MCF 10A (cell line): ENCODE measurements at regions of chr11 and their contacts with region 1.

Region 1: DNA sequence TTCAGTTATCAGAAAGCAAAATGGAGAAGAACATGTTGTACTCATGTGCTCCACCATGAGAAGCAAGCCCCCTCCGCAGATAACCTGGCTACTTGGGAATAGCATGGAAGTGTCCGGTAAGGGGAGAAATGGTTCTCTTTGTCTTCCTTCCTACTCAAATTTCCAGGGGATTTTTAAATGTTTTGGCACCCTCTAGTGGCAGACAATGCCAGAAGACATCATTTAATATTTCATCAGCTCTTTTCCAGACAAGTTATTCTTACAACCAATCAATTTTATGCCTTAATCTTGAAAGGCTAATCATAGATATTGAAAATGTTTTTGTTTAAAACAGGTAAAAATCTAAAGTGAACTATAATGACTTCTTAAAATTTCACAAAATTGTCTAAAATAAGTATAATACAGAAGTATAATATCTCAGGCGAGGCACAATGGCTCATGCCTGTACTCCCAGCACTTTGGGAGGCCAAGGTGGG is 15.7 kb downstream of the CRTAM start:
- DNase-seq: peak; percentile 81
- H3K4me3 Mint-ChIP-seq: no peak overlapping the region
- H3K27ac Mint-ChIP-seq: no peak overlapping the region
- H3K4me1 Mint-ChIP-seq: peaks cover 20% of the 10 kb centered on the region
- H3K27me3 Mint-ChIP-seq: no peaks in the 10 kb centered on the region
- CTCF ChIP-seq: peak; percentile 57

Region 2: GRCh38 chr11:122628810-122629555 is 225.0 kb before region 1 on chr11:
- CTCF ChIA-PET with region 1: interaction called, 53 read pairs
- POLR2A ChIA-PET with region 1: interaction called, 6 read pairs
- intact Hi-C with region 1: loop called (anchors 1 kb)
- DNase-seq: peak; percentile 82
- H3K4me3 Mint-ChIP-seq: no peak overlapping the region
- H3K27ac Mint-ChIP-seq: no peak overlapping the region
- H3K4me1 Mint-ChIP-seq: peaks cover 18% of the 10 kb centered on the region
- H3K27me3 Mint-ChIP-seq: no peaks in the 10 kb centered on the region
- CTCF ChIP-seq: peak; percentile 83

Region 3: DNA sequence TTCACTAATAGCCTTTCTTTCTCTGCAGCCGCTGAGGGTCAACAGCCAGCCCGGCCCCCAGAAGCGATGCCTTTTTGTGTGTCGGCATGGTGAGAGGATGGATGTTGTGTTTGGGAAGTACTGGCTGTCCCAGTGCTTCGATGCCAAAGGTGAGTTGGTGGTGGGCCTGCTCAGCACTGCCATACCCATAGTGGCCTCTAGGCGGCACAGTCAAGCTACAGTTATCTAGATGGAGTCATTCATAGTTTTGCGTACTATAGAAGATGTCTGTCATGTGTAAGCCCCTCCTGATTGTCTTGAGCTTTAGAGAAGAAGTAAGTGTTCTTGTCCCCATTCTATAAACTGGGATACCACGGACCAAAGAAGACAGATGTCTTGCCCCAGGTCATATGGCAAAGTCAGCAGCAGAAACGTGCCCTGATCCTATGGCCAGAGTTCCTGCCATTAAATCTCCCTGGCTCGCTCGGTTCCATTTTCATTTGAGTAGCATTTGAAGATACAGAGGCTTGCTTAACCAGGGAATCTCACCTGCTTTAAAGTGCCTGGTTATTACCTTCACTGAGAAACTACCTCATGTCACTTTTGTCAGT is 57.8 kb before region 1 on chr11:
- CTCF ChIA-PET with region 1: interaction called, 404 read pairs
- POLR2A ChIA-PET with region 1: interaction called, 5 read pairs
- intact Hi-C with region 1: loop called (anchors 1 kb)
- DNase-seq: peak; percentile 62
- H3K4me3 Mint-ChIP-seq: no peak overlapping the region
- H3K27ac Mint-ChIP-seq: no peak overlapping the region
- H3K4me1 Mint-ChIP-seq: peaks cover 10% of the 10 kb centered on the region
- H3K27me3 Mint-ChIP-seq: no peaks in the 10 kb centered on the region
- CTCF ChIP-seq: peak; percentile 94

Region 4: DNA sequence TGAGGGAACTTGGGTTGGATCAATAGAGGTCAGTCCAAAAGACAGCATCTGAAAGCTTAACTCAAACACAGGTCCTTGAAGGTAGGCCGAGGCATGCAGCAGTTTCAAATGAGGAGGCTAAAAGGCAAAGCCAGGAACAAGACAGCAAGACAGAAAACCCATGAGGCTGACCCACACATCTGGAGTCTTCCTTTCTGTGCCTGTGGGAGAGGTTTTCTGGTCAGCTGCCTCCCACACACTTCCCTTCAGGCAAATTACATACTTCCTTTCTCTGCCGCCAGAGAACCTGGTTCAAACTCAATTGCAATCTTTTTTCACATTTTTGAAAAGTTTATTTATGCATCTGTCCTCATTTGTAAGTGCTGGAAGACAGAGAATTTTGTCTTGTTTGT is 45.5 kb before region 1 on chr11:
- CTCF ChIA-PET with region 1: interaction called, 26 read pairs
- POLR2A ChIA-PET with region 1: interaction called, 16 read pairs
- intact Hi-C with region 1: no loop called
- DNase-seq: no peak
- H3K4me3 Mint-ChIP-seq: no peak overlapping the region
- H3K27ac Mint-ChIP-seq: peak overlapping the region; percentile 70
- H3K4me1 Mint-ChIP-seq: peaks cover 32% of the 10 kb centered on the region
- H3K27me3 Mint-ChIP-seq: no peaks in the 10 kb centered on the region
- CTCF ChIP-seq: no peak

Region 5: GRCh38 chr11:122843281-122844141 is 10.5 kb before region 1 on chr11:
- CTCF ChIA-PET with region 1: interaction called, 16 read pairs
- POLR2A ChIA-PET with region 1: interaction called, 4 read pairs
- intact Hi-C with region 1: no loop called
- DNase-seq: no peak
- H3K4me3 Mint-ChIP-seq: no peak overlapping the region
- H3K27ac Mint-ChIP-seq: no peak overlapping the region
- H3K4me1 Mint-ChIP-seq: no peaks in the 10 kb centered on the region
- H3K27me3 Mint-ChIP-seq: no peaks in the 10 kb centered on the region
- CTCF ChIP-seq: no peak

Region 6: DNA sequence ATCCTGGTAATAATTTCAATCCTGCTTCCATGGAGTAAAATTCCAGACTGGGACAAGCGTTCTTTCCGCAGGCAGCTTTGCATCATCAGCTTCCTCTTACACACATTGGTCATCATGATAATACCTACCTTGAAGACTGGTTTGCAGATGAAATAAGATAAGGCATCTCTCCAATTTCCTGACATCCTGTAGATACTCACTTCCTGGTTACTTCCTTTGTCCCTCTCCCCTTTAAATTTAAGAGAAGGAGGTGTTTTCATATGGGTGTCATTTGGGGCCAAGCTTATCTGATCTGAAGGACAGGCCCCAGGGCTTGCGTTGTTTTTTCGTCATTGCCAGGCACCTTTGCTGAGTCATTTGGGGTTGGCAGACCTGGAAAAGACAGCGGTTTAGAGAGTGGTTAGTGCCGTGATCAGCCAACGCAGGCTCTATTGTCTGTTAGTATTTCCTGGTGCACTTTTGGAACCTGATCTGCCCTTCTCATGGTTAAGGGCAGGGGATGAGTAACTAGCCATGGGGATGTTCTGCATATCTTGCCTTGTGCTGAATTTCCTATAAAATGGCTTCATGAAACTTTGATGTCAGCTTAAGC is 600.1 kb after region 1 on chr11:
- CTCF ChIA-PET with region 1: no interaction called
- POLR2A ChIA-PET with region 1: no interaction called
- intact Hi-C with region 1: no loop called
- DNase-seq: peak; percentile 95
- H3K4me3 Mint-ChIP-seq: peak overlapping the region; percentile 24
- H3K27ac Mint-ChIP-seq: peak overlapping the region; percentile 78
- H3K4me1 Mint-ChIP-seq: peaks cover 15% of the 10 kb centered on the region
- H3K27me3 Mint-ChIP-seq: no peaks in the 10 kb centered on the region
- CTCF ChIP-seq: no peak